Activated B cell treated with CpG ODN at 0.5 μM for 24 hours (primary cell): ENCODE measurements at regions of chr7 and their contacts with region 1.

Region 1: GRCh38 chr7:74101061-74101681 is 17.6 kb downstream of the LIMK1 start:
- DNase-seq: peak; percentile 60
- ATAC-seq: peak; percentile 79
- H3K4me3 Mint-ChIP-seq: peak overlapping the region; percentile 70
- H3K27ac Mint-ChIP-seq: peak overlapping the region; percentile 98
- H3K4me1 Mint-ChIP-seq: peaks cover 38% of the 10 kb centered on the region
- H3K27me3 Mint-ChIP-seq: no peaks in the 10 kb centered on the region
- CTCF ChIP-seq: no peak

Region 2: DNA sequence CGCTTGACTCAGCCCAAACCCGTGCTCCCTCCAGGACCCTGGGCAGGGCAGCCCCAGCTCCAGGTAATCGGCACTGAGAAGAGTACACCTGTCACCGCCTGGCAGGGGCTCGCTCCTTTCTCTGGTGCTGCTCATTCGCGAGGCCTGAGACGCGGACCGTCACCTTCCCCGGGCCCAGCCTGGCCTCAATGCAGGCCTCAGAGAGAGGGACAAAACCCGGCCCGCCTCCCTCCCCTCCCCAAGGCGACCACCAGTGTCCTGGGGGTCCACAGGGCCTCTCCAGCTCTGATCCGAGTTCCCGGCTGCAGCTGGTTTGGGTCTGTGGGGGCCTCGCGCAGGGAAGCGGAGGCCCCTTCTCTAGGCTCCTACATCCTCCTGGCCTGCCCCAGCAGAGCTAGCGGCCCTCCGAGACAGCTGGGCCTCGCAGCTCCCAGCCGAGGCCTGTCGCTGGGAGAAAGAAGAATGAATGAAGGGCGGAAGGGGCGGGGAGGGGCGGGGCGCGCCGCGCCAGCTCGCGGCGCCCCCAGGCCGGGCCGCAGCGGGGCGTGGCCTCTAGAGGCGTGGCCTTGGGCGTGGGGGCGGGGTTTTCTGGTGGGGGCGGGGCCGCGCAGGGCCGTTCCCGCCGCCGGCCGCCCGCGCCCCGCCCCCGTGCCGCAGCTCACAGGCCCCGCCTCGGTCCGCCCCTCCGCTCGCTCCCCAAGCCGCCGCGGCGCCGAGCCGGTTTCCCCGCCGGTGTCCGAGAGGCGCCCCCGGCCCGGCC is 17.9 kb before region 1 on chr7 and contains the start of gene LIMK1:
- CTCF ChIA-PET with region 1: interaction called, 3 read pairs
- POLR2A ChIA-PET with region 1: interaction called, 35 read pairs
- intact Hi-C with region 1: loop called (anchors 1 kb)
- DNase-seq: peak; percentile 86
- ATAC-seq: peak; percentile 95
- H3K4me3 Mint-ChIP-seq: peak within 1 kb of the TSS; percentile 84
- H3K27ac Mint-ChIP-seq: peak within 1 kb of the TSS; percentile 53
- H3K4me1 Mint-ChIP-seq: peaks cover 7% of the 10 kb centered on the region
- H3K27me3 Mint-ChIP-seq: no peaks in the 10 kb centered on the region
- CTCF ChIP-seq: no peak
- total RNA-seq, gene LIMK1: 59.6 and 62.7 TPM in 2 replicates

Region 3: GRCh38 chr7:74121401-74122249 is 20.5 kb after region 1 on chr7:
- CTCF ChIA-PET with region 1: no interaction called
- POLR2A ChIA-PET with region 1: no interaction called
- intact Hi-C with region 1: loop called (anchors 2 kb)
- DNase-seq: peak; percentile 23
- ATAC-seq: peak; percentile 82
- H3K4me3 Mint-ChIP-seq: no peak overlapping the region
- H3K27ac Mint-ChIP-seq: peak overlapping the region; percentile 79
- H3K4me1 Mint-ChIP-seq: peaks cover 4% of the 10 kb centered on the region
- H3K27me3 Mint-ChIP-seq: no peaks in the 10 kb centered on the region
- CTCF ChIP-seq: no peak